Left cardiac atrium (tissue), 4 donors: ENCODE measurements at regions of chr3 and their contacts with region 1.

Region 1: GRCh38 chr3:40971191-40972168 is 227.8 kb upstream of the CTNNB1 start:
- DNase-seq: peak; percentile 84
- ATAC-seq: peak; percentile 83 to 98

Region 2: GRCh38 chr3:41026394-41027177 is 55.1 kb after region 1 on chr3:
- intact Hi-C with region 1: loop called in 1 of 2 experiments (anchors 5 kb)
- DNase-seq: peak; percentile 90
- ATAC-seq: peak; percentile 94 to 97

Region 3: GRCh38 chr3:41327718-41328117 is 356.2 kb after region 1 on chr3:
- intact Hi-C with region 1: no loop called
- DNase-seq: no peak
- ATAC-seq: no peak